Activated CD4-positive, alpha-beta T cell treated with anti-CD3 and anti-CD28 coated beads, Interleukin-2, amount 10 ng/mL, durations not matched to agents 24 days and 14 days (primary cell): ENCODE measurements at regions of chr19 and their contacts with region 1.

Region 1: GRCh38 chr19:1942078-1942933 is 1.3 kb downstream of the CSNK1G2 start:
- DNase-seq: peak; percentile 95
- H3K4me3 Mint-ChIP-seq: peak overlapping the region; percentile 92
- H3K27ac Mint-ChIP-seq: peak overlapping the region; percentile 93
- H3K4me1 Mint-ChIP-seq: peaks cover 30% of the 10 kb centered on the region
- H3K27me3 Mint-ChIP-seq: no peaks in the 10 kb centered on the region

Region 2: GRCh38 chr19:1767464-1767933 is 174.8 kb before region 1 on chr19:
- intact Hi-C with region 1: no loop called
- DNase-seq: peak; percentile 88
- H3K4me3 Mint-ChIP-seq: no peak overlapping the region
- H3K27ac Mint-ChIP-seq: no peak overlapping the region
- H3K4me1 Mint-ChIP-seq: peaks cover 2% of the 10 kb centered on the region
- H3K27me3 Mint-ChIP-seq: peaks cover 65% of the 10 kb centered on the region

Region 3: GRCh38 chr19:1875646-1876495 is 66.4 kb before region 1 on chr19:
- intact Hi-C with region 1: loop called (anchors 2 kb)
- DNase-seq: peak; percentile 97
- H3K4me3 Mint-ChIP-seq: peak overlapping the region; percentile 99
- H3K27ac Mint-ChIP-seq: peak overlapping the region; percentile 95
- H3K4me1 Mint-ChIP-seq: peaks cover 16% of the 10 kb centered on the region
- H3K27me3 Mint-ChIP-seq: no peaks in the 10 kb centered on the region

Region 4: DNA sequence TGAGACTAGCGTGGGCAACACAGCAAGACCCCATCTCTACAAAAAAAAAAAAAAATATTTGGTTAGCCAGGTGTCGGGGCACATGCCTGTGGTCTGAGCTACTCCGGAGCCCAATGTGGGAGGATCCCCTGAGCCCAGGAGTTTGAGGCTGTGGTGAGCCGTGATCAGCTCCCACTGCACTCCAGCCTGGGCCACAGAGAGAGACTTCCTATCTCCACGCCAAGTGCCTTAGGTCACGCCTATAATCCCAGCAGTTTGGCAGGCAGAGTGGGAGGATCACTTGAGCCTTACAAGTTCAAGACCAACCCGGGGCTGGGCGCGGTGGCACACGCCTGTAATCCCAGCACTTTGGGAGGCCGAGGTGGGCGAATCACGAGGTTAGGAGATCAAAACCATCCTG is 45.8 kb before region 1 on chr19:
- intact Hi-C with region 1: no loop called
- DNase-seq: no peak
- H3K4me3 Mint-ChIP-seq: peak overlapping the region; percentile 83
- H3K27ac Mint-ChIP-seq: peak overlapping the region; percentile 97
- H3K4me1 Mint-ChIP-seq: peaks cover 19% of the 10 kb centered on the region
- H3K27me3 Mint-ChIP-seq: no peaks in the 10 kb centered on the region

Region 5: GRCh38 chr19:2041683-2042484 is 99.6 kb after region 1 on chr19:
- intact Hi-C with region 1: loop called (anchors 2 kb)
- DNase-seq: peak; percentile 100
- H3K4me3 Mint-ChIP-seq: peak overlapping the region; percentile 82
- H3K27ac Mint-ChIP-seq: peak overlapping the region; percentile 94
- H3K4me1 Mint-ChIP-seq: peaks cover 14% of the 10 kb centered on the region
- H3K27me3 Mint-ChIP-seq: no peaks in the 10 kb centered on the region